Dendritic cell treated with granulocyte-macrophage colony-stimulating factor and Interleukin-4, amounts not matched to agents 40 ng/mL and 50 ng/mL, for 4 days (primary cell): ENCODE measurements at regions of chr15 and their contacts with region 1.

Region 1: GRCh38 chr15:58701376-58701775 is 48.1 kb downstream of the ADAM10 start:
- H3K4me3 Mint-ChIP-seq: no peak overlapping the region
- H3K27ac Mint-ChIP-seq: no peak overlapping the region
- H3K4me1 Mint-ChIP-seq: peaks cover 38% of the 10 kb centered on the region
- H3K27me3 Mint-ChIP-seq: no peaks in the 10 kb centered on the region

Region 2: GRCh38 chr15:58715266-58715917 is 14.0 kb after region 1 on chr15:
- intact Hi-C with region 1: loop called (anchors 2 kb)
- H3K4me3 Mint-ChIP-seq: no peak overlapping the region
- H3K27ac Mint-ChIP-seq: no peak overlapping the region
- H3K4me1 Mint-ChIP-seq: peaks cover 32% of the 10 kb centered on the region
- H3K27me3 Mint-ChIP-seq: no peaks in the 10 kb centered on the region